MCF 10A (cell line): ENCODE measurements at regions of chr1 and their contacts with region 1.

Region 1: GRCh38 chr1:156129706-156130581 is 15.4 kb downstream of the LMNA start:
- DNase-seq: peak; percentile 99
- H3K4me3 Mint-ChIP-seq: peak overlapping the region; percentile 60
- H3K27ac Mint-ChIP-seq: peak overlapping the region; percentile 96
- H3K4me1 Mint-ChIP-seq: peaks cover 50% of the 10 kb centered on the region
- H3K27me3 Mint-ChIP-seq: no peaks in the 10 kb centered on the region
- CTCF ChIP-seq: peak; percentile 100

Region 2: DNA sequence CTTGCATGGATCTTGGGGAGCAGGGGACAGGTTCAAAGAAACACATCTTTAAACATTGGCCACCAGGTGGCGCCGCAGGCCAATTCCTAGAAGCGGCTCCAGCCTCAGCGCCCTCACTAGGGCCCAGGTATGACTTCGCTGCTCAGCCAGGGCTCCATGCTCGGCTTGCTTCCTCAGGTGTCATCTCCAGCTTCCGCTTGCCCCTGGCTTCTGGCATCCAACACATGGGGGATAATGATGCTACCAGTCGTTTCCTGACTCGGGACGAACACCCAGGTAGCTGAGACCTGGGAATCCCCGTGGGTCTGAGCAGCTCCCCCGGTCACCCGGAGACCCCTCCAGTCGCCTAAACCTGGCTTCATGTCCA is 39.1 kb before region 1 on chr1:
- CTCF ChIA-PET with region 1: interaction called, 1,892 read pairs
- POLR2A ChIA-PET with region 1: interaction called, 960 read pairs
- intact Hi-C with region 1: loop called (anchors 1 kb)
- DNase-seq: peak; percentile 95
- H3K4me3 Mint-ChIP-seq: no peak overlapping the region
- H3K27ac Mint-ChIP-seq: no peak overlapping the region
- H3K4me1 Mint-ChIP-seq: peaks cover 8% of the 10 kb centered on the region
- H3K27me3 Mint-ChIP-seq: no peaks in the 10 kb centered on the region
- CTCF ChIP-seq: peak; percentile 98

Region 3: GRCh38 chr1:156114101-156114916 is 15.6 kb before region 1 on chr1 and contains the start of gene LMNA:
- CTCF ChIA-PET with region 1: interaction called, 252 read pairs
- POLR2A ChIA-PET with region 1: interaction called, 960 read pairs
- intact Hi-C with region 1: loop called (anchors 1 kb)
- DNase-seq: peak; percentile 100
- H3K4me3 Mint-ChIP-seq: peak within 1 kb of the TSS; percentile 79
- H3K27ac Mint-ChIP-seq: peak within 1 kb of the TSS; percentile 97
- H3K4me1 Mint-ChIP-seq: peaks cover 46% of the 10 kb centered on the region
- H3K27me3 Mint-ChIP-seq: no peaks in the 10 kb centered on the region
- CTCF ChIP-seq: no peak
- total RNA-seq, gene LMNA: 620 and 716 TPM in 2 replicates

Region 4: DNA sequence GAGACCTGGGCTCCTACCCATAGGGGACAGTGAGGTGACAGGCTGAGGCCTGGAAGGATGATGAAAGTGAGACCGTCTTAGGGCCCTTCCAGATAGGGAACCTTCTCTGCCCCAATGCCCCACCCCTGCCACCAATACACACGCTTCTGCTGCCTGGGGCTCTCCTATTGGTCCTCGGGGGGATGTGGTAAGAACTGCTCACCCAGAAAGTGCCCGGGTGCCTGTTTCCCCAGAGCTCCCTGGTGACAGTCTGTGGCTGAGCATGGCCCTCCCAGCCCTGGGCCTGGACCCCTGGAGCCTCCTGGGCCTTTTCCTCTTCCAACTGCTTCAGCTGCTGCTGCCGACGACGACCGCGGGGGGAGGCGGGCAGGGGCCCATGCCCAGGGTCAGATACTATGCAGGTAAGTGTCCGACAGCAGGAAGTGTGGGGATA is 24.4 kb after region 1 on chr1:
- CTCF ChIA-PET with region 1: interaction called, 11 read pairs
- POLR2A ChIA-PET with region 1: no interaction called
- intact Hi-C with region 1: no loop called
- DNase-seq: no peak
- H3K4me3 Mint-ChIP-seq: no peak overlapping the region
- H3K27ac Mint-ChIP-seq: no peak overlapping the region
- H3K4me1 Mint-ChIP-seq: no peaks in the 10 kb centered on the region
- H3K27me3 Mint-ChIP-seq: peaks cover 12% of the 10 kb centered on the region
- CTCF ChIP-seq: no peak

Region 5: DNA sequence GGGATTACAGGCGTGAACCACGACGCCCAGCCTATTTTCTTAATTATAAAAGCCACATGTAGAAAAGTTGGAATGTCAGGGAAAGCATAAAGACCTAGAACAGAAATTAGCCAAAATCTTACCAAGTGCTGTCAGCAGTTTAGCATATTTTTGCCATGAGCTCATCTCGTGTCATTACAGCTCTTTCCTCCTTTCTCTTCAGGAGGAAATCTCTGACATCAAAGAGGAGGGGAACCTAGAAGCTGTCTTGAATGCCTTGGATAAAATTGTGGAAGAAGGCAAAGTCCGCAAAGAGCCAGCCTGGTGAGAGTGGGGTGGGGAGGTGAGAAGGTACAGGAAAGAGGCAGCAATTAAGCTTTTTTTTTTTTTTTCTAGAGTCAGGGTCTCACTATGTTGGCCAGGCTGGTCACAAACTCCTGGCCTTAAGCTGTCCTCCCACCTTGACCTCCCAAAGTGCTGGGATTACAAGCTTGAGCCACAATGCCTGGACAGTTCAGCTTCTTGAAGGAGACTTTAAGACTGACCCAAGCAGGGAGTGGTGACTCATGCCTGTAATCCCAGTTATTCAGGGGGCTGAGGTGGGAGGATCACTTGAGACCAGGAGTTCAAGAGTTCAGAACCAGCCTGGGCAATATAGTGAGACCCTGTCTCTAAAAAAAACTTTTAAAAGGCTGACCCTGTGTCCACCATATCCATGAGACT is 103.6 kb after region 1 on chr1:
- CTCF ChIA-PET with region 1: interaction called, 17 read pairs
- POLR2A ChIA-PET with region 1: no interaction called
- intact Hi-C with region 1: no loop called
- DNase-seq: no peak
- H3K4me3 Mint-ChIP-seq: no peak overlapping the region
- H3K27ac Mint-ChIP-seq: peak overlapping the region; percentile 51
- H3K4me1 Mint-ChIP-seq: peaks cover 7% of the 10 kb centered on the region
- H3K27me3 Mint-ChIP-seq: no peaks in the 10 kb centered on the region
- CTCF ChIP-seq: no peak

Region 6: GRCh38 chr1:156388174-156389137 is 258.5 kb after region 1 on chr1:
- CTCF ChIA-PET with region 1: no interaction called
- POLR2A ChIA-PET with region 1: no interaction called
- intact Hi-C with region 1: no loop called
- DNase-seq: no peak
- H3K4me3 Mint-ChIP-seq: no peak overlapping the region
- H3K27ac Mint-ChIP-seq: no peak overlapping the region
- H3K4me1 Mint-ChIP-seq: peaks cover 11% of the 10 kb centered on the region
- H3K27me3 Mint-ChIP-seq: no peaks in the 10 kb centered on the region
- CTCF ChIP-seq: no peak